H1 (cell line): ENCODE measurements at regions of chr11 and their contacts with region 1.

Region 1: GRCh38 chr11:29634248-29634647 is 382.6 kb downstream of the KCNA4 start:
- DNase-seq: no peak
- H3K4me3 ChIP-seq: no peak overlapping the region
- H3K27ac ChIP-seq: no peak overlapping the region
- H3K4me1 ChIP-seq: no peaks in the 10 kb centered on the region
- H3K27me3 ChIP-seq: no peaks in the 10 kb centered on the region
- CTCF ChIP-seq: peak in 2 of 3 experiments; percentile 39; a peak in 2 of 4 replicates
- EP300 ChIP-seq: no peak
- POLR2A ChIP-seq: no peak
- RAD21 ChIP-seq: peak; percentile 69 to 73

Region 2: GRCh38 chr11:29432719-29433325 is 201.4 kb before region 1 on chr11:
- CTCF ChIA-PET with region 1: interaction called, 13 read pairs
- POLR2A ChIA-PET with region 1: no interaction called
- DNase-seq: no peak
- H3K4me3 ChIP-seq: no peak overlapping the region
- H3K27ac ChIP-seq: no peak overlapping the region
- H3K4me1 ChIP-seq: no peaks in the 10 kb centered on the region
- H3K27me3 ChIP-seq: no peaks in the 10 kb centered on the region
- CTCF ChIP-seq: peak in 1 of 3 experiments; percentile 31; a peak in 2 of 4 replicates
- EP300 ChIP-seq: no peak
- POLR2A ChIP-seq: no peak
- RAD21 ChIP-seq: peak; percentile 49 to 58

Region 3: GRCh38 chr11:29518389-29519174 is 115.7 kb before region 1 on chr11:
- CTCF ChIA-PET with region 1: interaction called, 12 read pairs
- POLR2A ChIA-PET with region 1: no interaction called
- DNase-seq: peak in 1 of 2 experiments; percentile 52
- H3K4me3 ChIP-seq: no peak overlapping the region
- H3K27ac ChIP-seq: no peak overlapping the region
- H3K4me1 ChIP-seq: no peaks in the 10 kb centered on the region
- H3K27me3 ChIP-seq: no peaks in the 10 kb centered on the region
- CTCF ChIP-seq: peak; percentile 30 to 67 (median 47)
- EP300 ChIP-seq: no peak
- POLR2A ChIP-seq: no peak
- RAD21 ChIP-seq: peak; percentile 46 to 53

Region 4: DNA sequence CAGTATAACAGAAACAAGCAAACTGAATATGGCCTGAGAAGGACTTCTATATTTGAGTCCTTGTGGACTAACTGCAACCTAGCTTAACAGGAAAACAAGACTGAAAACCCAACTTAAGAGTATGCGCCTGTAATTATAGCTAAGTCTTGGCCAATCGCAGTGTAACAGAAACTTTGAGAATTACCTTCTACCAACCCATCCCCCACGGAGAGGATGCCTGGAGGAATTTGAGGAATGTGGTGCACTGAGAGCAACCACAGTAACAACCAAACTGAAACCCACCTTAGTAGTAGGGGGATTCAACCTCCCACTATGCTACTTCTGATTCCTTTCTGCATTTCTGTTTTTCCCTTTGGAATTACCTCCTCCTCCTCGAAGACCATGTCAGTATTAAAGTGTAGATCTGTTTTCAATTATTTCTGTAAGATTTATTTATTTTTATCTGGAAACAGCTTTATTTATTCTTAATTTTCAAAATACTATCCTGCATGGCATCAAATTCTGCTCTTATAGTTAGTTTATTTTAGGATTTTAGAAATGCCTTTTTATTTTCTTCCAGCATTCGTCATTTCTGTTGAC is 11.0 kb before region 1 on chr11:
- CTCF ChIA-PET with region 1: interaction called, 31 read pairs
- POLR2A ChIA-PET with region 1: interaction called, 3 read pairs
- DNase-seq: peak; percentile 51 to 61
- H3K4me3 ChIP-seq: peak overlapping the region in 3 of 4 experiments; percentile 5 to 47 (median 7); a peak in 3 of 8 replicates
- H3K27ac ChIP-seq: peak overlapping the region; percentile 93
- H3K4me1 ChIP-seq: peaks cover 3 to 7% (median 4%) of the 10 kb centered on the region in 4 experiments; a peak in 5 of 7 replicates
- H3K27me3 ChIP-seq: no peaks in the 10 kb centered on the region
- CTCF ChIP-seq: no peak
- EP300 ChIP-seq: peak in 1 of 2 experiments; percentile 97; a peak in 1 of 3 replicates
- POLR2A ChIP-seq: peak in 1 of 2 experiments; percentile 71; a peak in 2 of 3 replicates
- RAD21 ChIP-seq: peak in 1 of 2 experiments; percentile 33; a peak in 2 of 4 replicates

Region 5: DNA sequence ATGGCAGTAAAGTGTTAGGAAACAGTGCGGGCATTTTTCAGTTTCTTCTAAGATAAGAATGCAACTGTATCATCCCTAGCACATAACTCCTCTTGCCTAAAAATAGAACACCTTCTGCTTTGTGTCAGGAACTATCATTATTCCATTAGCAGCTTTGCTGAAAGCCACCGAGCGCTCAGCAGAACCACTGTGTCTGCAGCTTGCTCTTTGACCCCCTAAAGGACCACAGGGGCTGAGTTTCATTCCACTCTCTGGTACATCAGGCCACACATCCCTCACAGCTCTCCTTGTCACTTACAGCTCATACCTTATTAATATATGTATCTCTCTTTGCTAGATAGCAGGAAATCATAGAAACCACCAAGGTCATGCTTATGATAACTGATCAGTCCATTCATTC is 22.3 kb after region 1 on chr11:
- CTCF ChIA-PET with region 1: interaction called, 16 read pairs
- POLR2A ChIA-PET with region 1: no interaction called
- DNase-seq: no peak
- H3K4me3 ChIP-seq: no peak overlapping the region
- H3K27ac ChIP-seq: no peak overlapping the region
- H3K4me1 ChIP-seq: no peaks in the 10 kb centered on the region
- H3K27me3 ChIP-seq: no peaks in the 10 kb centered on the region
- CTCF ChIP-seq: no peak
- EP300 ChIP-seq: no peak
- POLR2A ChIP-seq: no peak
- RAD21 ChIP-seq: no peak